ENCODE measurements at regions of chr11 and their contacts with region 1.

Region 1: DNA sequence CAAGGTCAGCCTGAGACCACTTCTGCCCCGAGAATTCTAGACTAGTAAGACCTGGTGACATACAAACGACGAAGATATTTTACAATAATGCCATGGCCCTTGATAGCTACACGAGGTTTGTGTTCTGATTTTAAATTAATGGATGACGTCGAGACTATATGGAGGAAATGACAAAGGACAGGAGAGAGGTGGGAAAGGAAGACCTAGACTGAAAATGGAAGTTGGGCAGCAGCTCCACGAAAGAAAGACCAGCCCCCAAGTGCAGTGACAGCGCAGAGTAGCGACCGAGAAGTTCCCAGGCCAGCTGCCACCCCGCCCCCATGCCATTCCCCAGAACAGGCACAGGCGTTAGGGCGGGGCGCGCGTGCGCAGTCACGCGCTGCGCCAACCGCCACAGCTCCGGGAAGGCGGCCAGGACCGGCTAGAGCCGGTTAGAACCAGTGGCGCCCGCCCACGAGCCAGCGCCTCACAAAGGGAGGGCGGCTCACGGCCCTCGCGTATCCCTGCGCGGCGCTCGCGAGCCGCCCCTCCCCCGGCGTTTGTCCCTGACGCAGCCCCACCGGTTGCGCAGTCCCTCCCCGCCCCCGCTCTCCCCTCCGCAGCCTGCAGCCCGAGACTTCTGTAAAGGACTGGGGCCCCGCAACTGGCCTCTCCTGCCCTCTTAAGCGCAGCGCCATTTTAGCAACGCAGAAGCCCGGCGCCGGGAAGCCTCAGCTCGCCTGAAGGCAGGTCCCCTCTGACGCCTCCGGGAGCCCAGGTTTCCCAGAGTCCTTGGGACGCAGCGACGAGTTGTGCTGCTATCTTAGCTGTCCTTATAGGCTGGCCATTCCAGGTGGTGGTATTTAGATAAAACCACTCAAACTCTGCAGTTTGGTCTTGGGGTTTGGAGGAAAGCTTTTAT is 1.5 kb upstream of the MALAT1 start:
- DNase-seq: peak; percentile 100
- H3K4me3 ChIP-seq: peak overlapping the region; percentile 85
- H3K27ac ChIP-seq: peak overlapping the region; percentile 100
- H3K4me1 ChIP-seq: peaks cover 44% of the 10 kb centered on the region
- H3K27me3 ChIP-seq: no peaks in the 10 kb centered on the region
- CTCF ChIP-seq: no peak

Region 2: DNA sequence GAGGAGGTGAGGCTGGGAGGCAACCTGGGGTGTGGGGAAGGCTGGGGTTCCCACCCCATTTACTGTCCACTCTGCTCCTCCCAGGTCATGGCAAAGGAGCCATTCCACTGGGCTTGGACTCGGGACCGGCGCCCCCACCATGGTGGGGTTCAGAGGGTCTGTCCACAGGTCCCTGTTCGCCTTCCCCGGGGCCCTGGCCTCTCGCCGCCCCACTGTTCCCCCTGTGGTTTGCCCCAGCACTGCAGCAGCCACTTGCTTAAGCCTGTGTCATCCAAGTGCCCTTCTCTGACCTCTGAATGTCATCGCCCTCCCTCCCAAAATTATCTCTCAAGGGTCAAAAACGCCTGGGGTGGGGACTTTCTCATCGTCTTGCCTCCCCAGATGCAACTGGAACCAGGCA is 324.8 kb before region 1 on chr11:
- CTCF ChIA-PET with region 1: no interaction called
- POLR2A ChIA-PET with region 1: interaction called, 10 read pairs
- intact Hi-C with region 1: no loop called
- DNase-seq: no peak
- H3K4me3 ChIP-seq: no peak overlapping the region
- H3K27ac ChIP-seq: no peak overlapping the region
- H3K4me1 ChIP-seq: no peaks in the 10 kb centered on the region
- H3K27me3 ChIP-seq: no peaks in the 10 kb centered on the region
- CTCF ChIP-seq: no peak

Region 3: GRCh38 chr11:66113116-66113854 is 615.9 kb after region 1 on chr11:
- CTCF ChIA-PET with region 1: no interaction called
- POLR2A ChIA-PET with region 1: interaction called, 17 read pairs
- intact Hi-C with region 1: no loop called
- DNase-seq: peak; percentile 47
- H3K4me3 ChIP-seq: no peak overlapping the region
- H3K27ac ChIP-seq: peak overlapping the region; percentile 62
- H3K4me1 ChIP-seq: peaks cover 60% of the 10 kb centered on the region
- H3K27me3 ChIP-seq: no peaks in the 10 kb centered on the region
- CTCF ChIP-seq: no peak

Measured in A673 (cell line).